Activated CD8-positive, alpha-beta memory T cell treated with anti-CD3 and anti-CD28 coated beads, Interleukin-2, amount 10 ng/mL, durations not matched to agents 7 days and 5 days (primary cell): ENCODE measurements at regions of chr13 and their contacts with region 1.

Region 1: DNA sequence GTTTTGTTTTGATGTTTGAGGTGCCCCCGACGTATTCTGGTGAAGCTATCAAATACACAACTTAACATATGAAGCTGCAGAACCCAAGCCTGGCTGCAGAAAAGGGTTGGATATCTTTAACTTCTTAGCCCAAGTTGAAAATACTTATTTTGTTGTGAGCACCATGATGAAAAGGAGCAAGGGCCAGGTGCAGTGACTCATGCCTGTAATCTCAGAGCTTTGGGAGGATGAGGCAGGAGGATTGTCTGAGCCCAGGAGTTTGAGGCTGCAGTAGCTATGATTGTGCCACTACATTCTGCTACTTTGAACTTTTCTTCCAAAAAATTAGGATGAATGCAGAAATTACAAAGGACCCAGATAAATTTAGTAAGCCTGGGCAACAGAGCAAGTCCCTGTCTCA is 44.1 kb upstream of the UBE2L5 start:
- DNase-seq: no peak
- ATAC-seq: no peak
- H3K4me3 Mint-ChIP-seq: no peak overlapping the region
- H3K27ac Mint-ChIP-seq: peak overlapping the region; percentile 77
- H3K4me1 Mint-ChIP-seq: peaks cover 72% of the 10 kb centered on the region
- H3K27me3 Mint-ChIP-seq: no peaks in the 10 kb centered on the region

Region 2: GRCh38 chr13:30388406-30389283 is 10.5 kb after region 1 on chr13:
- CTCF ChIA-PET with region 1: interaction called, 83 read pairs
- DNase-seq: no peak
- ATAC-seq: no peak
- H3K4me3 Mint-ChIP-seq: peak overlapping the region; percentile 9
- H3K27ac Mint-ChIP-seq: peak overlapping the region; percentile 44
- H3K4me1 Mint-ChIP-seq: peaks cover 21% of the 10 kb centered on the region
- H3K27me3 Mint-ChIP-seq: no peaks in the 10 kb centered on the region